ENCODE measurements at regions of chr19 and their contacts with region 1.

Region 1: DNA sequence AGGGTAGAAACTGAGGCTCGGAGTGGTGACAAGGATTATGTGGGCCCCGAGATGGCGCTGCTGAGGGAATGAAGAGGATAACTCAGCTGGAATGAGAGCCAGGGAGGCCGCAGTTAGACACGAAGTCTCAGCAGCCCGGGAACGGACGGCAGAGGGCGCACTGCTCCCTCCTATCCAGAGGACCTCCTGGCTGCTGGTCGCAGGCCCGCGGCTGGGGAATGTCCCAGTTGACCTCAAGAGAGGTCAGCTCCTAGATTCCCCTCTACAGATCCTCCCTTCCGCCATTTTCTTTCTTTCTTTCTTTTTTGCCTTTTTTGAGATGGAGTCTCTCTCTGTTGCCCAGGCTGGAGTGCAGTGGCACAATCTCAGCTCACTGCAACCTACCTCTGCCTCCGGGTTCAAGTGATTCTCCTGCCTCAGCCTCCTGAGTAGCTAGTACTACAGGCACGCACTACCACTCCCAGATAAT is 24.1 kb upstream of the ASPDH start:
- DNase-seq: peak; percentile 52 to 86 (median 80)
- ATAC-seq: peak; percentile 75 to 86 (median 82)
- H3K4me3 ChIP-seq: no peak overlapping the region
- H3K27ac ChIP-seq: no peak overlapping the region
- H3K4me1 ChIP-seq: peaks cover 0 to 3% (median 0%) of the 10 kb centered on the region in 12 donors
- H3K27me3 ChIP-seq: no peaks in the 10 kb centered on the region
- CTCF ChIP-seq: peak; percentile 62 to 82 (median 75)
- POLR2A ChIP-seq: no peak

Region 2: DNA sequence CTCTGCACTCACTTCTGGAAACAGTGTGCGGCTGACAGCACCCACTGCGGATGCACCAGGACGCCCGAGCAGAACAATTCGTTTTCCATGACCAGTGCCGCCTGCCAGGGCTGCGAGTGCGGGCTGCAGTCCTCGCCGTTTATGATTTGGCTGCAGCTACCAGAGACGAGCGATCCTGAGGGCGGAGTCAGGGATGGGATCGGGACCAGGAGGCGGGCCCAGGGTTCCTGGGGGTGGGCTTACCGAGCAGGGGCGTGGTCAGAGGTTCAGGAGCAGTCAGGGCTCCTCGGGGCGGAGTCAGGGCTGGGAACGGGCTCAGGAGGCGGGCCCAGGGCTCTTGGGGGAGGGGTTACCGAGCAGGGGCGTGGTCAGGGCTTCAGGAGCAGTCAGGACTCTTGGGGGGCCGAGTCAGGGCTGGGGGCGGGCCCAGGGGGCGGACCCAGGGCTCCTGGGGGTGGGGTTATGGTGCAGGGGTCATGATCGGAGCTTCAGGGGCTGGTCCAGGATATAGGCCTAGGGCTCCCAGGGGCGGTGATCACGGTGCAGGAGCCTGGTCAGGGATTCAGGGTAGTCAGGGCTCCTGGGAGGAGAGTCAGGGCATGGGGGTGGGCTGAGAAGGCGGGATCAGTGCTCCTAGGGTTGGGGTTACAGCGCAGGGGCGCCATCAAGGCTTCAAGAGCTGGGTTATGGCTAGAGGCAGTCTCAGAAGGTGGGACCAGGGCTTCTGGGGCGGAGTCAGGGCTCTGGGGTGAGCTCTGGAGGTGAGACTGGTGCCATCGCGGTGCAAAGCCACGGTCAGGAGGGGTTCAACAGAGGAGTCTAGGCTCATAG is 371.7 kb after region 1 on chr19:
- intact Hi-C with region 1: loop called in 1 of 10 experiments (anchors 10 kb)
- DNase-seq: no peak
- ATAC-seq: peak in 2 of 4 donors; percentile 42 to 50
- H3K4me3 ChIP-seq: no peak overlapping the region
- H3K27ac ChIP-seq: no peak overlapping the region
- H3K4me1 ChIP-seq: peaks cover 0 to 7% (median 0%) of the 10 kb centered on the region in 12 donors
- H3K27me3 ChIP-seq: peaks cover 18 to 82% (median 63%) of the 10 kb centered on the region in 9 donors
- CTCF ChIP-seq: no peak
- POLR2A ChIP-seq: no peak

Region 3: DNA sequence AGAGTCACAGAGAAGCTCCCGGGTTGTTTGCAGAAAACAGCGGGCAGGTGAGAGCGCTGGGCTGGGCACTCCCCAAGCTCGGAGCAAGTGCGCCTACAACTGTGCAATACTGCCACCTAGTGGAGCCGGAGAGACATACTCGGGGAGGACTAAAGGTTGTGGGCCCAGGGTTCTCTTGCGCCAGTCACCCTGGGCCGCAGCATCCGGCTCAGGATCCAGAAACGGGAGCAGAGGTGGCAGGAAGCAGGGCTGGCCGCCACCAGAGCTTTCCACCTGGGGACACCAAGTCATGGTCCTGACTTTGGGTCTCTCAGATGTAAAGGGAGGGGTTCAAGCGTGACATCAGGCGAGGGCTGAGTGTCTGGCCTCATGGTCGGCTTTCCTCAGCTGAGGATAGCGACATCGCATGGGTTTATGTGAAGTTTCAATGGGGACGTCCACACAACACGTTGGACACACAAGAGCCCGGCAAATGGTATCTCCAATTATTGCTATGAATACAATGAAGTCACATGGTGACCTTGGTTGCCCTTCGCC is 384.6 kb after region 1 on chr19:
- intact Hi-C with region 1: loop called in 2 of 10 experiments (anchors 5 to 10 kb)
- DNase-seq: peak; percentile 61 to 77 (median 68)
- ATAC-seq: peak; percentile 81 to 96 (median 90)
- H3K4me3 ChIP-seq: no peak overlapping the region
- H3K27ac ChIP-seq: no peak overlapping the region
- H3K4me1 ChIP-seq: peaks cover 0 to 4% (median 0%) of the 10 kb centered on the region in 12 donors
- H3K27me3 ChIP-seq: peaks cover 0 to 59% (median 21%) of the 10 kb centered on the region in 9 donors
- CTCF ChIP-seq: peak; percentile 65 to 89 (median 81)
- POLR2A ChIP-seq: no peak

Measured in heart left ventricle (tissue), 16 donors.